ENCODE measurements at regions of chr19 and their contacts with region 1.

Region 1: GRCh38 chr19:43595999-43596841 is at the starts of genes IRGQ and ZNF576:
- DNase-seq: peak; percentile 98
- ATAC-seq: peak; percentile 81
- H3K4me3 ChIP-seq: peak within 1 kb of the TSS; percentile 74 to 90 (median 84)
- H3K27ac ChIP-seq: peak within 1 kb of the TSS; percentile 94
- H3K4me1 ChIP-seq: peaks cover 19% of the 10 kb centered on the region
- H3K27me3 ChIP-seq: no peaks in the 10 kb centered on the region; a peak in 1 of 5 replicates
- CTCF ChIP-seq: peak; percentile 65
- EP300 ChIP-seq: no peak
- POLR2A ChIP-seq: peak; percentile 74 to 78
- RAD21 ChIP-seq: peak; percentile 55
- total RNA-seq, gene IRGQ: 12.4 and 16.5 TPM in 2 replicates
- total RNA-seq, gene ZNF576: 9.6 and 10.9 TPM in 2 replicates

Region 2: DNA sequence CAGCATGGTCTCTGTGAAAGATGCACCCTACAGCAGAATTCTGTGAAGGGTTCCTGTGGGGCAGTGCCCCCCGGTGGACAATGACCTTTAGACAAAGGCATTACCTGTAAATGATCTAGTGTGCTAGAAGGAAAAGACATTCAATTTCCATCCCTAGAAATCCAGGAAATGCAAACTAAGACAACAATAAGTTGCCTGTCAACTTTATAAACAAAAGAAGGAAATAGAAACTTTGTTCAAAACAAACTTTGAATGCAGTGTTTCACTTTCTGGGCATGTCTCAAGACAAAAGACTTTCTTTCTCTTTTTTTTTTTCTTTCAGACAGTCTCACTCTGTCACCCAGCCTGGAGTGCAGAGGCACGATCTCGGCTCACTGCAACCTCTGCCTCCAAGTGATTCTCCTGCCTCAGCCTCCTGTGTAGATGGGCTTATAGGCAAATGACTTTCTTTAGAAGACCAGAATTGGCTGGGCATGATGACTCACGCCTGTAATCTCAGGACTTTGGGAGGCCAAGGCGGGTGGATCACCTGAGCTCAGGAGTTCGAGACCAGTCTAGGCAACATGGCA is 166.0 kb before region 1 on chr19:
- CTCF ChIA-PET with region 1: no interaction called
- POLR2A ChIA-PET with region 1: no interaction called
- in situ Hi-C with region 1: no loop called
- intact Hi-C with region 1: no loop called
- DNase-seq: no peak
- ATAC-seq: no peak
- H3K4me3 ChIP-seq: no peak overlapping the region
- H3K27ac ChIP-seq: no peak overlapping the region
- H3K4me1 ChIP-seq: no peaks in the 10 kb centered on the region
- H3K27me3 ChIP-seq: no peaks in the 10 kb centered on the region
- CTCF ChIP-seq: no peak
- EP300 ChIP-seq: no peak
- POLR2A ChIP-seq: no peak
- RAD21 ChIP-seq: no peak

Region 3: DNA sequence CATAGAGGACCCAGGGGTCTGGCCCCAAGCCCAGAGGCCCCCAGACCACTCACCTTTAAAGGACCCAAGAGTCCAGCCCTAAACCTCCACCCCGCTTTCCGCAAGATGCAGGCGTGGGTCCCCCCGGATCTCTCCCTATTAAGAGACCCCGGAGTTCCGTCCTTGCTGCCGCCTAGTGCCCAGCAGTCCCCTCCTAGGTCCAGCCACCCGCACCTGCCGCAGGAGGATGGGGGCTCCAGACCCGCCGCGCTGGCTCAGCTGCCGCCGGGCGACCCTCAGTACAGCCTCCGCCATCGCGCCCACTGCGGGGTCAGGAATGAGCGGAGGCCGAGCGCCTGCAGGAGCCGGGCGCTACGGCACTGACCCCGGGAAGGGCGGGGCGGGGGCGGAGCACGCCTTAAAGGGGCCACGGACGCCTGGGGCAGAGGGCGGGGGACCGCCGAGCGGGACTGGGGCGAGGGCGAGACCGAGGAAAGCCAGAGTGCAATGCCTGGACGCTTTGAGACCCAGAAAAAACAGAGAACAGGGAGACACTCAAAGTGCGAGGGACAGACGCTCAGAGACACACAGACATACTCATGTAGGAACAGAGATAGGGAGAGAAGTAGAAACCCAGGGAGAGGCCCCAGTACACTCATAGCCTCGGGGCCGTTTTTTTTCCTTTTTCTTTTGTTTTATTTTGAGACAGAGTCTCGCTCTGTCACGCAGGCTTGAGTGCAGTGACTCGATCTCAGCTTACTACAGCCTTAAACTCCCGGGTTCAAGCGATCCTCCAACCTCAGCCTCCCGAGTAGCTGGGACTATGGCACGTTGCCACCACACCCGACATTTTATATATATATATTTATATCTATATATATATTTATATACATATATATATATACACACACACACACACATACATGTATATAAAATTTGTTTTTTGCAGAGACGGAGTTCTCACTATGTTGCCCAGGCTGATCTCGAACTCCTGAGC is 69.0 kb before region 1 on chr19 and contains the start of gene ETHE1:
- CTCF ChIA-PET with region 1: no interaction called
- POLR2A ChIA-PET with region 1: interaction called, 8 read pairs
- in situ Hi-C with region 1: no loop called
- intact Hi-C with region 1: loop called (anchors 10 kb)
- DNase-seq: peak; percentile 44
- ATAC-seq: peak; percentile 87
- H3K4me3 ChIP-seq: peak within 1 kb of the TSS; percentile 83 to 87 (median 85)
- H3K27ac ChIP-seq: peak within 1 kb of the TSS; percentile 65
- H3K4me1 ChIP-seq: peaks cover 11% of the 10 kb centered on the region
- H3K27me3 ChIP-seq: no peaks in the 10 kb centered on the region; a peak in 1 of 5 replicates
- CTCF ChIP-seq: 0 out of 2 replicates have a peak, but pooled peaks have one; percentile 3
- EP300 ChIP-seq: no peak
- POLR2A ChIP-seq: peak; percentile 56 to 94
- RAD21 ChIP-seq: 0 out of 2 replicates have a peak, but pooled peaks have one; percentile 13
- total RNA-seq, gene ETHE1: 25.9 and 32.5 TPM in 2 replicates

Region 4: DNA sequence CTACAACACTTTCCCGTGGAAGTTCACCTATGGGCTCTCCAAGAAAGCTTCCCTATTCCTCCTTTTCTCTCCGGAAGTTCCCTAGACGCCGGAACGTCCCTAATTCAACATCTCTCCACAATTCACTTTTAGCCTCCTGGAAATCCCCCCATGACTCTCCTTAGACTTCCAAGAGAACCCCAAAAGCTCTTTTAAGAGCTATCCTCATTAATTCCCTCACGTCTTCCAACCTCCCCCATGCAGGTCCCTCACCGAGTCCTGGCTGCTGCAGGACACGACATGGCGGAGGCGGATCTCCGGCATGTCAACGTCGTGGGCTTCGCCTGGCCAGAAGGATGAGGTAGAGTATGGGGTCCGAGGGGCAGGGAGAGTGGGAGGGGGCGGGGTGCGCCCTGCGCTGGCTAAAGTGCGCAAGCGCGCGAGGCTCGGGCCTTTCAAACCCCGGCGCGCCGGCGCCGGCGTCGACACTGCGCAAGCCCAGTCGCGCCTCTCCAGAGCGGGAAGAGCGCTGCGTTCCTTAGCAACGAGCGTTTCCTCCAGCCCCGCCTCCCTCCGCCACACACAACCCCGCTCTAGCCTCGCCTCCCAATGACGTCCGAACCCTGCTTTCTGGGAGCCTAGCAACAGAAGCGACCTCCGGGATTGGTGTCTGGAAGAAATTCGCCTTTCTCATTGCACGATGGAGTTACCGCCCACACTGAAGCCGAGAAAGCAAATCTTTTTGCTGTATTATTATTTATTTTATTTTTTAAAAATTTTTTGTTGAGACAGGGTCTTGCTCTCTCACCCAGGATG is 20.9 kb before region 1 on chr19 and contains the starts of genes PINLYP and XRCC1:
- CTCF ChIA-PET with region 1: no interaction called
- POLR2A ChIA-PET with region 1: interaction called, 6 read pairs
- in situ Hi-C with region 1: no loop called
- intact Hi-C with region 1: loop called (anchors 1 kb)
- DNase-seq: peak; percentile 96
- ATAC-seq: peak; percentile 97
- H3K4me3 ChIP-seq: peak within 1 kb of the TSS; percentile 87 to 92 (median 89)
- H3K27ac ChIP-seq: peak within 1 kb of the TSS; percentile 72
- H3K4me1 ChIP-seq: peaks cover 19% of the 10 kb centered on the region; the same call in 1 of the 2 replicates
- H3K27me3 ChIP-seq: no peaks in the 10 kb centered on the region; a peak in 1 of 5 replicates
- CTCF ChIP-seq: no peak
- EP300 ChIP-seq: 0 out of 4 replicates have a peak, but pooled peaks of 1 of the 2 experiments have one; percentile 17
- POLR2A ChIP-seq: peak; percentile 60 to 67
- RAD21 ChIP-seq: no peak
- total RNA-seq, gene PINLYP: 0.24 TPM in 1 of 2 replicates, not detected in the other
- total RNA-seq, gene XRCC1: 21.8 and 26.3 TPM in 2 replicates

Region 5: GRCh38 chr19:43634872-43635560 is 38.8 kb after region 1 on chr19:
- CTCF ChIA-PET with region 1: no interaction called
- POLR2A ChIA-PET with region 1: interaction called, 20 read pairs
- in situ Hi-C with region 1: no loop called
- intact Hi-C with region 1: no loop called
- DNase-seq: peak; percentile 69
- ATAC-seq: peak; percentile 74
- H3K4me3 ChIP-seq: peak overlapping the region; percentile 61 to 76 (median 67)
- H3K27ac ChIP-seq: peak overlapping the region; percentile 90
- H3K4me1 ChIP-seq: peaks cover 59% of the 10 kb centered on the region
- H3K27me3 ChIP-seq: no peaks in the 10 kb centered on the region
- CTCF ChIP-seq: no peak
- EP300 ChIP-seq: peak in 1 of 2 experiments; percentile 42; a peak in 1 of 4 replicates
- POLR2A ChIP-seq: peak; percentile 74 to 75
- RAD21 ChIP-seq: 0 out of 2 replicates have a peak, but pooled peaks have one; percentile 15

Region 6: GRCh38 chr19:43668406-43669158 is 72.4 kb after region 1 on chr19:
- CTCF ChIA-PET with region 1: no interaction called
- POLR2A ChIA-PET with region 1: interaction called, 17 read pairs
- in situ Hi-C with region 1: no loop called
- intact Hi-C with region 1: no loop called
- DNase-seq: peak; percentile 96
- ATAC-seq: peak; percentile 97
- H3K4me3 ChIP-seq: peak overlapping the region; percentile 58 to 74 (median 63)
- H3K27ac ChIP-seq: no peak overlapping the region
- H3K4me1 ChIP-seq: peaks cover 26% of the 10 kb centered on the region
- H3K27me3 ChIP-seq: peaks cover 0 to 12% of the 10 kb centered on the region in 2 experiments; a peak in 2 of 5 replicates
- CTCF ChIP-seq: no peak
- EP300 ChIP-seq: no peak
- POLR2A ChIP-seq: peak; percentile 47 to 64; a peak in 3 of 4 replicates
- RAD21 ChIP-seq: no peak